ENCODE measurements at regions of chr15 and their contacts with region 1.

Region 1: DNA sequence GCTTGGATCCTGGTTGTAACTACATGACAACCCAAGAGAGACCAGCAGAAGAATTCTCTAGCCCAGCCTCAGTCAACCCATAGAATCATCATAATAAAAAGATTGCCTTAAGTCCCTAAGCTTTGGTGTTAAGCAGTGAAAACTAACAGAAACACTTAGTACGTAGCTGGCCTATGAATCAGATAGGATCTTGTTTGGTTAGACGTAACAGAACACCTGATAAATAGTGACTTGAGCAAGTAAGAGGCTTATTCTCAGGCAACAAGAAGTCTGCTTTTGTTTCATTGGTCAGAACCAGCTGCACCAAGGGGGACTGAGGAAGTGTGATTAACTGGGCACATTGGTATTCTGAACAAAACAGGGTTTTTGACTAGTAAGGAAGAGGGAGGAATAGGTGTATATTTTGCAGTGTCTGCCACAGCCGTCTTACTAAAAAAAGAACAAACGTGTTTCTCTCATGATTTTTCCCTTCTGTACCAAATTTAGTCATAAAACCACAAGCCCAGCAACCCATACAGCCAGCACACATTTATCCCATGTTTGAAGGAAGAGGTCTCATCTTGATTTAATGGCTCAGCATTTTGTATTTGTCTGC is 53.3 kb upstream of the GLCE start:
- DNase-seq: peak in 1 of 2 experiments; percentile 61
- H3K4me3 ChIP-seq: no peak overlapping the region
- H3K27ac ChIP-seq: no peak overlapping the region
- H3K4me1 ChIP-seq: no peaks in the 10 kb centered on the region
- H3K27me3 ChIP-seq: no peaks in the 10 kb centered on the region
- CTCF ChIP-seq: no peak

Region 2: DNA sequence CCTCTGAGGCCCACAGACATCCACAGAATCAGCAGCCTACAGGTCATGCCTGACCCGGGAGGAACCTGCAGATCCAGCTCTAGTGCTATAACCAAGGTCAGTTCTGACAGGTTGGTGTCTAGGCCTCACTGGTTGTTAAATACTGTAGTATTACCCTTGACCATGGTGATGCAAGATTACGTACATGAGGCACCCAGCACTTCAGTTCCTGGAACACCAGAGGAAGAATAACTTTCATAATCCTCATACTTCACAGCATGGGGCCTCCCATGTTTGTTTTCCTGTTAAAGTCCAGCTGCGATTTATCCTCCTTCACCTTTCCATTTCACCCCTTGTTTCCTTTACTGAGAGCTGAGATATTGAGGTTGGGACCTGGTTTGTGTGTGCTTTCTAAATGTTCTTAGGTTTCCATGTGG is 18.9 kb after region 1 on chr15:
- CTCF ChIA-PET with region 1: interaction called, 11 read pairs
- POLR2A ChIA-PET with region 1: no interaction called
- intact Hi-C with region 1: no loop called
- DNase-seq: peak in 1 of 2 experiments; percentile 82
- H3K4me3 ChIP-seq: no peak overlapping the region
- H3K27ac ChIP-seq: peak overlapping the region; percentile 72
- H3K4me1 ChIP-seq: peaks cover 39% of the 10 kb centered on the region
- H3K27me3 ChIP-seq: no peaks in the 10 kb centered on the region
- CTCF ChIP-seq: no peak